ENCODE measurements at regions of chr9 and their contacts with region 1.

Region 1: GRCh38 chr9:91101611-91102168 is 260.0 kb downstream of the AUH start:
- DNase-seq: no peak
- ATAC-seq: no peak
- H3K4me3 ChIP-seq: no peak overlapping the region
- H3K27ac ChIP-seq: peak overlapping the region in 10 of 12 donors; percentile 62 to 93 (median 80)
- H3K4me1 ChIP-seq: peaks cover 3 to 41% (median 30%) of the 10 kb centered on the region in 12 donors
- H3K27me3 ChIP-seq: no peaks in the 10 kb centered on the region
- CTCF ChIP-seq: no peak
- POLR2A ChIP-seq: no peak

Region 2: GRCh38 chr9:90921111-90921510 is 180.6 kb before region 1 on chr9:
- intact Hi-C with region 1: loop called in 1 of 10 experiments (anchors 2 kb)
- DNase-seq: peak; percentile 72 to 95 (median 88)
- ATAC-seq: peak; percentile 92 to 97 (median 96)
- H3K4me3 ChIP-seq: no peak overlapping the region
- H3K27ac ChIP-seq: peak overlapping the region in 6 of 12 donors; percentile 16 to 81 (median 60)
- H3K4me1 ChIP-seq: peaks cover 0 to 12% (median 2%) of the 10 kb centered on the region in 12 donors
- H3K27me3 ChIP-seq: no peaks in the 10 kb centered on the region
- CTCF ChIP-seq: peak in 1 of 12 donors; percentile 33
- POLR2A ChIP-seq: no peak

Region 3: DNA sequence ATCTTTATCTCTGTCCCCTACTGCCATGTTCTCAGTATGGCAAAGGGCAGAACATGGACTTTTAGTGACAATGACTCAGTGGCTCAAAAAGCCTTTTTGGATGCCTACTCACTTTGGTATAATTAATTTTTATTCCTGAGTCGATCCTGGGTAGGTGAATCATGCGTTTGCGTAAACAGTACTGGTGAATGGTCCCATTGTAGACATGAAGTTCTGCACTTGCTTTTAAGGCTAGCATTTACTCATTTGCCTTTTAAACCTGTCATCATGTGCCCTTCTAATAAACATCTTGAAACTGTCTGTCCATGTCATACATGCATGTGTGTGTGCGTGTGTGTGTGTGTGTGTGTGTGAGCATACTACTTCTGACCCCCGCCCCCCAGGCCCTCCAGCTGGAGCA is 37.1 kb after region 1 on chr9:
- intact Hi-C with region 1: no loop called
- DNase-seq: no peak
- ATAC-seq: no peak
- H3K4me3 ChIP-seq: no peak overlapping the region
- H3K27ac ChIP-seq: no peak overlapping the region
- H3K4me1 ChIP-seq: peaks cover 0 to 10% (median 1%) of the 10 kb centered on the region in 12 donors
- H3K27me3 ChIP-seq: no peaks in the 10 kb centered on the region
- CTCF ChIP-seq: no peak
- POLR2A ChIP-seq: no peak

Region 4: GRCh38 chr9:91150998-91151717 is 49.5 kb after region 1 on chr9:
- intact Hi-C with region 1: loop called in 1 of 10 experiments (anchors 10 kb)
- DNase-seq: no peak
- ATAC-seq: peak in 3 of 4 donors; percentile 31 to 45 (median 44)
- H3K4me3 ChIP-seq: no peak overlapping the region
- H3K27ac ChIP-seq: peak overlapping the region in 1 of 12 donors; percentile 34
- H3K4me1 ChIP-seq: peaks cover 0 to 39% (median 0%) of the 10 kb centered on the region in 12 donors
- H3K27me3 ChIP-seq: no peaks in the 10 kb centered on the region
- CTCF ChIP-seq: no peak
- POLR2A ChIP-seq: no peak

Measured in heart left ventricle (tissue), 16 donors.